HCT116 (cell line): ENCODE measurements at regions of chr4 and their contacts with region 1.

Region 1: GRCh38 chr4:17810260-17811077 is at the starts of genes DCAF16 and NCAPG:
- DNase-seq: peak; percentile 98
- ATAC-seq: peak; percentile 89
- H3K4me3 ChIP-seq: peak within 1 kb of the TSS; percentile 80 to 93
- H3K27ac ChIP-seq: peak within 1 kb of the TSS; percentile 84
- H3K4me1 ChIP-seq: peaks cover 5 to 20% of the 10 kb centered on the region in 2 experiments; a peak in 2 of 4 replicates
- H3K27me3 ChIP-seq: no peaks in the 10 kb centered on the region
- CTCF ChIP-seq: no peak
- POLR2A ChIP-seq: peak; percentile 96
- RAD21 ChIP-seq: no peak
- total RNA-seq, gene DCAF16: 65.7 TPM
- total RNA-seq, gene NCAPG: 79.4 TPM

Region 2: GRCh38 chr4:17544205-17544604 is 266.3 kb before region 1 on chr4:
- CTCF ChIA-PET with region 1: interaction called, 9 read pairs
- POLR2A ChIA-PET with region 1: no interaction called
- RAD21 ChIA-PET with region 1: no interaction called
- intact Hi-C with region 1: loop called (anchors 1 kb)
- DNase-seq: no peak
- ATAC-seq: no peak
- H3K4me3 ChIP-seq: no peak overlapping the region
- H3K27ac ChIP-seq: no peak overlapping the region
- H3K4me1 ChIP-seq: no peaks in the 10 kb centered on the region; a peak in 1 of 4 replicates
- H3K27me3 ChIP-seq: no peaks in the 10 kb centered on the region
- CTCF ChIP-seq: no peak
- POLR2A ChIP-seq: no peak
- RAD21 ChIP-seq: no peak

Region 3: GRCh38 chr4:17597517-17597916 is 213.0 kb before region 1 on chr4:
- CTCF ChIA-PET with region 1: no interaction called
- POLR2A ChIA-PET with region 1: no interaction called
- RAD21 ChIA-PET with region 1: no interaction called
- intact Hi-C with region 1: loop called (anchors 2 kb)
- DNase-seq: no peak
- ATAC-seq: peak; percentile 92
- H3K4me3 ChIP-seq: no peak overlapping the region
- H3K27ac ChIP-seq: no peak overlapping the region
- H3K4me1 ChIP-seq: no peaks in the 10 kb centered on the region
- H3K27me3 ChIP-seq: no peaks in the 10 kb centered on the region
- CTCF ChIP-seq: peak; percentile 47 to 56 (median 49); a peak in 4 of 6 replicates
- POLR2A ChIP-seq: no peak
- RAD21 ChIP-seq: peak; percentile 61

Region 4: DNA sequence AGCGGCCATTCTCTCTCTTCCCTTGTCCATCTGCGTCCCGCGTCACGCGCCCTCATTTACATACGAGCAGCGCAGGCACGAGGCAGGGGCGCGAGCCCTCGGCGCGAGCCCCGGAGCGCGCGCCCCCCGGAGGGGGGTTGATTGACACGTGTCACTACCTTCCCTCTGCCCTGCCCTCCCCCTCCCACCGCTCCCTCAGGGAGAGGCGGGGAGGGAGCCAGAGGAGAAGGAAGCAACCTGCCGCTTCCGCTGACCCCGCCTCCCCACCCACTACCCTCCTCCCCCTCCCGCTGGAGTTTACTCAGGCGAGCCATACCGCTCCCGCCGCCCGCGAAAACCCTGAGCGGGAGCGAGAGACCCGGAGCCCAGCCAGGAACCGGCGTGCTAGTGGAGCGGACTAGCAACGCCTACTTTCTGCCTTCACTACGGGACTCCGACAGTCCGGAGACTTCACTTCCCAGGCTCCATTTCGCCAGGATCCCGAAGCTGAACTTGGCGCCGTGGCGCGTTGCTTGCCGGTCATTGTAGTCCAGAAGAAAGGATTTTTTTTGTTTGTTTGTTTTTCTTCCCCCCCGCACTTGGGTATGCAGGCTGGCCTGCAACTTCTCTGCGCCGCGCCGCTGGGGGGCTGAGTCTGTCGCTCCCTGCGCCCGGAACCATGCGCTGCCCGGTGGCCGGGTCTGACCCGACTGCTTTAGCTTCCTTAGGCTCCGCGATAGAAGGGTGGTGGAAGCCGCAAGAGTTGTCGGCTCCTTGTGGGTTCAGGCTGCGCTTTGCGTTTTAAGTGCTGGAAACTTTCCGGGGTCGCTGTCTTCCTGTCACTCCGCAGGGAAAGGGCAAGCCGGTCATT is 211.5 kb after region 1 on chr4 and contains the start of gene LCORL:
- CTCF ChIA-PET with region 1: no interaction called
- POLR2A ChIA-PET with region 1: no interaction called
- RAD21 ChIA-PET with region 1: no interaction called
- intact Hi-C with region 1: loop called (anchors 2 kb)
- DNase-seq: peak; percentile 93
- ATAC-seq: peak; percentile 82
- H3K4me3 ChIP-seq: peak within 1 kb of the TSS; percentile 77 to 79
- H3K27ac ChIP-seq: peak within 1 kb of the TSS; percentile 86
- H3K4me1 ChIP-seq: peaks cover 6 to 19% of the 10 kb centered on the region in 2 experiments; a peak in 3 of 4 replicates
- H3K27me3 ChIP-seq: no peaks in the 10 kb centered on the region
- CTCF ChIP-seq: no peak
- POLR2A ChIP-seq: no peak
- RAD21 ChIP-seq: no peak
- total RNA-seq, gene LCORL: 18.0 TPM

Region 5: GRCh38 chr4:19187096-19187495 is 1376.6 kb after region 1 on chr4:
- CTCF ChIA-PET with region 1: no interaction called
- POLR2A ChIA-PET with region 1: no interaction called
- RAD21 ChIA-PET with region 1: no interaction called
- intact Hi-C with region 1: no loop called
- DNase-seq: no peak
- ATAC-seq: no peak
- H3K4me3 ChIP-seq: no peak overlapping the region
- H3K27ac ChIP-seq: no peak overlapping the region
- H3K4me1 ChIP-seq: no peaks in the 10 kb centered on the region
- H3K27me3 ChIP-seq: no peaks in the 10 kb centered on the region
- CTCF ChIP-seq: no peak
- POLR2A ChIP-seq: no peak
- RAD21 ChIP-seq: no peak